ENCODE measurements at regions of chr2 and their contacts with region 1.

Region 1: GRCh38 chr2:148020111-148021058 is at the start of gene ORC4:
- DNase-seq: peak; percentile 99
- ATAC-seq: peak; percentile 87
- H3K4me3 ChIP-seq: peak within 1 kb of the TSS; percentile 99
- H3K27ac ChIP-seq: peak within 1 kb of the TSS; percentile 59
- H3K4me1 ChIP-seq: peaks cover 25% of the 10 kb centered on the region; the same call in 1 of the 2 replicates
- H3K27me3 ChIP-seq: no peaks in the 10 kb centered on the region
- CTCF ChIP-seq: peak; percentile 62
- total RNA-seq, gene ORC4: 34.6 and 65.9 TPM in 2 replicates

Region 2: DNA sequence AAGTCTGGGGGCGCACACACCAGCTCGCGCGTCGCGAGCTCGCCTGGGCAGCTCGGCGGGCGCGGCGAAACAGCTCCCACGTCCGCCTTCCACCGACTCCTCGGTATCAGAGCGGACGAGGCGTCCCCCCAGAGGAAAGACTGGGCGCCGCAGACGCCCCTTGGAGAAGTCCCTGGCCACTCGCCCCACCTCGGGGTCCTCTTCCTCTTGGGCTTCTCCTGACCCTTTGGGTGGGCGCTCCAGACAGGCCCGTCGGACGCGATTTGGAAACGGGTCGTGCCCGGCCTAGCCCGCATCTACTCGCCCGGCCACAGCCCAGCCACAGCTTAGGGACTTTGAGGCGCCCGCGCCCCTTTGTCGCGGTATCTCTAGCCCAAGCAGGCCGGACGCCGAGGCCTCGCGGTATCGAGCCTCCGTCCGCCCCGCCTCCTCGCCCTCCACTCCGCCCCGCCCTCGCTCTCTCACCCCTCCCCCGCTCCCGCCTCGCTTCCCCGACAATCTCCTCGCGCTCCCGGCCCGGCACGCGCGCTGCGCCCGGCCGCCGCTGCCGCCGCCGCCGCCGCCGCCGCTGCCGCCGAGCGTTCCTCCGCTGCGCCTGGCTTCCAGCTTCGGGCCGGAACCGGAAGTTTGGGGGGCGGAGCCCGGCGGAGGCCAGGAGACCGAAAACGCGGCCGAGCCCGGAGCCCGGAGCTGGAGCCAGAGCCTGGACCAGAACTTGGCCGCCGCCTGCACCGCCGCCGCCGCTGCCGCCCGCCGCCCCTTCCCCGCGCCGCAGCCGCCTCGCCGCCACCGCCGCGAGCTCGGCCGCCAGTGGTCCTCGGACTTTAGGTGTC is 176.3 kb before region 1 on chr2:
- CTCF ChIA-PET with region 1: interaction called, 21 read pairs
- POLR2A ChIA-PET with region 1: interaction called, 3 read pairs
- intact Hi-C with region 1: loop called (anchors 5 kb)
- DNase-seq: peak; percentile 92
- ATAC-seq: peak; percentile 81
- H3K4me3 ChIP-seq: peak overlapping the region; percentile 94
- H3K27ac ChIP-seq: peak overlapping the region; percentile 80
- H3K4me1 ChIP-seq: peaks cover 29% of the 10 kb centered on the region
- H3K27me3 ChIP-seq: no peaks in the 10 kb centered on the region
- CTCF ChIP-seq: 0 out of 2 replicates have a peak, but pooled peaks have one; percentile 31

Region 3: GRCh38 chr2:147998203-147998602 is 22.2 kb before region 1 on chr2:
- CTCF ChIA-PET with region 1: interaction called, 21 read pairs
- POLR2A ChIA-PET with region 1: no interaction called
- intact Hi-C with region 1: no loop called
- DNase-seq: no peak
- ATAC-seq: no peak
- H3K4me3 ChIP-seq: no peak overlapping the region
- H3K27ac ChIP-seq: no peak overlapping the region
- H3K4me1 ChIP-seq: no peaks in the 10 kb centered on the region
- H3K27me3 ChIP-seq: no peaks in the 10 kb centered on the region
- CTCF ChIP-seq: no peak

Region 4: DNA sequence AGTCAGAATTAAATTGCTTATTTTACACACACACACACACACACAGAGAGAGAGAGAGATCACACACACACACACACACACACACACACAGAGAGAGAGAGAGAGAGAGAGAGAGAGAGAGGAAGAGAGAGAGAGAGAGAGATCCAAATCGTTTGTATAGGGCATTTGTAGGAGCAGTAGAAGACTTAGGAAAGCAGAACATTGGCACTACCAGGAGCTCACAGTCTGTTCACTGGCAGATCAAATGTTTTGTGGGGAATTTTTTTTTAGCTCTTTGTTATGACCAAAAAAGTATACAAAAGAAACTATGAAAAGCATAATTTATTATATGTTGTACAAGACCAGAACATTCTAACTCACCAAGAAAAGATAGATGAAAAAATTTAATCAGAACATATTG is 82.3 kb after region 1 on chr2:
- CTCF ChIA-PET with region 1: interaction called, 12 read pairs
- POLR2A ChIA-PET with region 1: no interaction called
- intact Hi-C with region 1: no loop called
- DNase-seq: no peak
- ATAC-seq: no peak
- H3K4me3 ChIP-seq: no peak overlapping the region
- H3K27ac ChIP-seq: no peak overlapping the region
- H3K4me1 ChIP-seq: no peaks in the 10 kb centered on the region
- H3K27me3 ChIP-seq: no peaks in the 10 kb centered on the region
- CTCF ChIP-seq: no peak

Region 5: GRCh38 chr2:148167855-148168254 is 147.5 kb after region 1 on chr2:
- CTCF ChIA-PET with region 1: no interaction called
- POLR2A ChIA-PET with region 1: no interaction called
- intact Hi-C with region 1: no loop called
- DNase-seq: no peak
- ATAC-seq: no peak
- H3K4me3 ChIP-seq: no peak overlapping the region
- H3K27ac ChIP-seq: no peak overlapping the region
- H3K4me1 ChIP-seq: no peaks in the 10 kb centered on the region
- H3K27me3 ChIP-seq: no peaks in the 10 kb centered on the region
- CTCF ChIP-seq: peak; percentile 12; the same call in 1 of the 2 replicates

Region 6: GRCh38 chr2:148201075-148202004 is 181.0 kb after region 1 on chr2:
- CTCF ChIA-PET with region 1: interaction called, 13 read pairs
- POLR2A ChIA-PET with region 1: no interaction called
- intact Hi-C with region 1: no loop called
- DNase-seq: peak; percentile 66
- ATAC-seq: peak; percentile 88
- H3K4me3 ChIP-seq: no peak overlapping the region
- H3K27ac ChIP-seq: no peak overlapping the region
- H3K4me1 ChIP-seq: no peaks in the 10 kb centered on the region
- H3K27me3 ChIP-seq: no peaks in the 10 kb centered on the region
- CTCF ChIP-seq: peak; percentile 78

Region 7: GRCh38 chr2:148618631-148619030 is 598.2 kb after region 1 on chr2:
- CTCF ChIA-PET with region 1: interaction called, 11 read pairs
- POLR2A ChIA-PET with region 1: no interaction called
- intact Hi-C with region 1: no loop called
- DNase-seq: no peak
- ATAC-seq: no peak
- H3K4me3 ChIP-seq: no peak overlapping the region
- H3K27ac ChIP-seq: no peak overlapping the region
- H3K4me1 ChIP-seq: peaks cover 28% of the 10 kb centered on the region
- H3K27me3 ChIP-seq: no peaks in the 10 kb centered on the region
- CTCF ChIP-seq: no peak

Region 8: DNA sequence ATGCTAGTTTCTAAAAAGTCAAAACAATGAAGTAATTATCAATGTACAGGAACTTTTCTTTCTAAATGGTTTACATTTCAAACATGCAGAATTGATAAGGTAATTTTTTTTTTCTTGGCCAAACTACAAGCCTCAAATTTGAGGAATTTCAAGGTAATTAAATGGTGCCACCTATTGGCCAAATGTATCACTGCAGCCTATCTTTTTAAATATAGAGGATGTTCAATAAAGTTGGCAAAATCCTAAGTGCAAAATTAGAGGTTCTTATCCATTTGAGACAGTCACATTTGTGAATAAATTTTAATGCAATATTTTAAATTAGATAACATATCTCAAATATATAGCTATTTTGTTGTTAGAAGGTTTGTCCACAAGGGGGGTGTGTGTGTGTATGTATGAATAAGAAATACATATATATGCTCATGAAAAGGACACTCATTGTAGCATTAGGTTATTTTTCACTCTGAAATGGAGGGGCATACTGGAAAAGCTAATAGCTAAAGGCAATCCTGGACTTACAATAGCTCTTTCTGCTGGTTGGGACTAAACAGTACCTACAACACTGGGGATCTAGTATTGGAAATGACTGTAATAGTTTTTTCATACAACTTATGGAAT is 1541.0 kb after region 1 on chr2:
- CTCF ChIA-PET with region 1: interaction called, 17 read pairs
- POLR2A ChIA-PET with region 1: no interaction called
- intact Hi-C with region 1: no loop called
- DNase-seq: peak; percentile 77
- ATAC-seq: no peak
- H3K4me3 ChIP-seq: no peak overlapping the region
- H3K27ac ChIP-seq: no peak overlapping the region
- H3K4me1 ChIP-seq: peaks cover 19% of the 10 kb centered on the region
- H3K27me3 ChIP-seq: no peaks in the 10 kb centered on the region
- CTCF ChIP-seq: peak; percentile 92